ENCODE measurements at regions of chr5 and their contacts with region 1.

Region 1: GRCh38 chr5:180328296-180329137 is 24.6 kb downstream of the GFPT2 start:
- DNase-seq: peak; percentile 84
- H3K4me3 ChIP-seq: no peak overlapping the region
- H3K27ac ChIP-seq: no peak overlapping the region
- H3K4me1 ChIP-seq: no peaks in the 10 kb centered on the region
- H3K27me3 ChIP-seq: no peaks in the 10 kb centered on the region
- CTCF ChIP-seq: peak; percentile 61

Region 2: DNA sequence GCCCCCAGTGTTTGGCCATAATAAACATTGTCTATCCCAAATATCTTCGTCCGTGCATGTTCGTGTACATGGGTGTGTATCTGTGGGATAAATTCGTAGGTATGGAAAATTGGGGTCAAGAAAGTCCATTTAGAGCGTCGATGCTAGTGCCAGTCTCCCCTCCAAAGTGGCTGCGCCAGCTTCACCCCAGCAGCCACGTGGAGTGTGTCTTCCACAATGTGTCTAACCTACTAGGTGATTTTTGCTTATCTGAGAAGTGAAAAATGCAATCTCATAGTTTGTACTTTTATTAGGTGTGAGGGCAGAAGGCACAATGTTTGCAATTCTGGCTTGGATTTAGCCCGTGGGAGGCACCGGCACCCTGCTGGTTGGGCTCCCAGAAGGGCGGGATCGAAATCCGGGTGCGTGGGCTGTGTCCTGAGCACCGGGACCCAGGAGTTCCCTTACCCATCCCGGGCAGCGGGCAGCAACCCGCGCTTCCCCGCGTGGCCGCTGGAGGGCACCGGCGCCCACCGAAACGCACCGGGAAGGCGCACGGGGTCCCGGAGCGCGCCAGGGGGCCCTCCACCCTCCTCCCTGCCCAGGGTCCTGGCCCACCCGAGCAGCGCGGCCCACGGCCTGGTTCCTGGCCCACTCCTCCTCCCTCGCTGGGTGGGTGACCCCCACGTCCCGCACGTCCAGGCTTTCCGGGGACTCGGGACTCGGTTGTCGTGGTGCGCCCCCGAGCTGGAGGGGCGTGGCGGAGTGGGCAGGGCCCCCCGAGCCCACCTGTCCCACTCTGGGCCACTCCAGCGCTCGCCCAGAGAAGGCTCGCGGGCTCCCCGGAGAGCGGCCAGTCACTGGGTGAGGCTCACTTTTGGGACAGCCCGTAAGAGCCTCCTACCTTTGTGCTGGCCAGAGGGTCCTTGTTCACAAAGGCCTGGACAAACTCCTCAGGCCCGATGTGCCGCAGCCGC is 201.5 kb before region 1 on chr5:
- intact Hi-C with region 1: loop called (anchors 5 kb)
- DNase-seq: peak; percentile 31
- H3K4me3 ChIP-seq: no peak overlapping the region
- H3K27ac ChIP-seq: no peak overlapping the region
- H3K4me1 ChIP-seq: no peaks in the 10 kb centered on the region
- H3K27me3 ChIP-seq: no peaks in the 10 kb centered on the region
- CTCF ChIP-seq: peak; percentile 79

Measured in colonic mucosa (tissue), 4 donors.